HEK293 (cell line): ENCODE measurements at regions of chr20 and their contacts with region 1.

Region 1: GRCh38 chr20:6583134-6583738 is 184.2 kb upstream of the BMP2 start:
- H3K4me3 ChIP-seq: no peak overlapping the region
- H3K27ac ChIP-seq: no peak overlapping the region
- H3K4me1 ChIP-seq: no peaks in the 10 kb centered on the region
- CTCF ChIP-seq: no peak

Region 2: GRCh38 chr20:6502219-6502618 is 81.0 kb before region 1 on chr20:
- CTCF ChIA-PET with region 1: no interaction called
- POLR2A ChIA-PET with region 1: no interaction called
- H3K4me3 ChIP-seq: no peak overlapping the region
- H3K27ac ChIP-seq: no peak overlapping the region
- H3K4me1 ChIP-seq: no peaks in the 10 kb centered on the region
- CTCF ChIP-seq: no peak

Region 3: GRCh38 chr20:6595704-6596103 is 12.5 kb after region 1 on chr20:
- CTCF ChIA-PET with region 1: interaction called, 16 read pairs
- POLR2A ChIA-PET with region 1: no interaction called
- H3K4me3 ChIP-seq: no peak overlapping the region
- H3K27ac ChIP-seq: no peak overlapping the region
- H3K4me1 ChIP-seq: no peaks in the 10 kb centered on the region
- CTCF ChIP-seq: no peak

Region 4: DNA sequence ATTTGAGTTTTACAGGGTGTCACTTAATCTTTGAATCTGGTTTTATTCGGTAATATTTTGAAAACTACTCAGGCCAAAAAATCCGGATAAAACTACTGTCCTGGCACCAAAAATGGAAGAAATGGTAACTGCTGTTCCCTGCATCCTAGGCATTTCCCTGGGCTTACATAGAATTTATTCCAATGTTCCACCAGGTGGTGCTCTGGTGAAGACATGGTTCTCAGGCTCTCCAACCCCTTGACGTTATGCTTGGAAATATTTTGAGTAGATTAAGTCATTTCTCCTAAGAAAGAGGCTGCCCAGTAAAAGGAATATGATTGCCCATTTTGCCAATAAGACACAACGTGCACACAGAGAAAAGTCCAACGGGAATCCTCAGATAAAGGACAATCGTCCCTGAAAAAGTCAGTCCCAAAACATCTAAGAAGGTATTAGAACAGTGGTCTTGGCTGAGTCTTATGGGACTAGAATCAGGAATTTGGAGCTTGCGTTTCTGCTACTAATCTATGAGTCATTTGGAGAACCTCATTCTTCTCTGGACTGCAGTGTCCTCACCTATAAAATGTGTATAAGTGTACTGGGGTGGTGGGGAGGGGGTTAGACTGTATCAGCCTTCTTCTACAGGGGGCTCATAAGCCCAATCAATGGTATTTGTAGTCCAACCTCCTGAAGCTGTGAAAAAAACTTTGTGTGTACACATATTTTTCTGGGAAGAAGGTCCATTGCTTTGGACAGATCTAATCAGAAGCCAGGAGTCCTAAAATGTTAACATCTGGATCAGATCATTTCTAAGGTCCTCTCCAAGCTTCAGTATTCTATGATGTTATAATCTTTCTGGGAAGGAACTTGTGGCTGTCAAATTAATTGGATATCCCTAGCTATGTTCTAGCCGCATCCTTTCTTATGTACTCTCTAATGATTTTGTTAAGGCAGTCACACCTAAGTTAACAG is 53.2 kb after region 1 on chr20:
- CTCF ChIA-PET with region 1: interaction called, 13 read pairs
- POLR2A ChIA-PET with region 1: no interaction called
- H3K4me3 ChIP-seq: no peak overlapping the region
- H3K27ac ChIP-seq: no peak overlapping the region
- H3K4me1 ChIP-seq: no peaks in the 10 kb centered on the region
- CTCF ChIP-seq: no peak

Region 5: DNA sequence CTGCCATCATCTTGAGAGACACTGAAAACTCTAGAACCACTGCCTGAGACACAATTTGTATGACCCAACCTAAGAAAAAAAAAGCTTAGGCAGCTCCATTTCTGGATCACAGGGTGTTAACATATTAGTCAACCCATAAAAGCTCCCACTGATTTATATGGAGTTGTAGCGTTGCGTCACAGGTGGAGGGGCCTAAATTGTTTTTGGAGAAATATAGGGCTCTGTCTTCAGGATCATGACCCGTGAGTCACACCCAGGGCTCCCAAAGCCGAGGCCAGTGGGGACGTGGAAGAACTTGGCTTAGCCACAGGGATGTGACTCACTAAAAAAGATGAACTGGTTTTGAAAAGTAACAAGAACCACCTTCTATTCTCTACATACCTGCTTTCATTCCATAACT is 67.8 kb after region 1 on chr20:
- CTCF ChIA-PET with region 1: no interaction called
- POLR2A ChIA-PET with region 1: no interaction called
- H3K4me3 ChIP-seq: no peak overlapping the region
- H3K27ac ChIP-seq: no peak overlapping the region
- H3K4me1 ChIP-seq: no peaks in the 10 kb centered on the region; the same call in 1 of the 2 replicates
- CTCF ChIP-seq: no peak